HepG2 (cell line): ENCODE measurements at regions of chr9 and their contacts with region 1.

Region 1: GRCh38 chr9:32426278-32426939 is 42.0 kb downstream of the ACO1 start:
- DNase-seq: peak; percentile 92
- ATAC-seq: peak; percentile 96
- H3K4me3 ChIP-seq: peak overlapping the region in 2 of 3 experiments; percentile 25 to 40; a peak in 2 of 6 replicates
- H3K27ac ChIP-seq: peak overlapping the region; percentile 88
- H3K4me1 ChIP-seq: peaks cover 53% of the 10 kb centered on the region
- H3K27me3 ChIP-seq: no peaks in the 10 kb centered on the region
- CTCF ChIP-seq: no peak
- EP300 ChIP-seq: peak in 1 of 2 experiments; percentile 81; a peak in 3 of 4 replicates
- POLR2A ChIP-seq: peak in 1 of 2 experiments; percentile 27; a peak in 1 of 4 replicates
- RAD21 ChIP-seq: no peak

Region 2: DNA sequence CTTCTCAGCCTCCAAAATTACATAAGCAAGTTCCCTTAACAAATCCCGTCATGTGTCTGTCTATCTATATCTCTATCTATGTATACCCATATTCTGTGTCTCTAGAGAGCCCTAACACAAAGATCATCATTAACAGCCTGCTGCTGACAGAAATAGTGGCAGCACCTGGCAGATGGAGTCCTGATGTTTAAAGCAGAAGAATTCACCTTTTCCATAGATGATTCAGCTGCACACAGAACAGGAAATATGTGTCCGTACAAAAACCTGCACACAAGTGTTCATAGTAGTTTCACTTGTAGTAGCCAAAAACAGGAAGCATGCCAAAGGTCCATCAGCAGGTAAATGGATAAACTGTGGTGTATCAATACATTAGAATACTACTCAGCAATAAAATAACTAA is 87.0 kb before region 1 on chr9:
- CTCF ChIA-PET with region 1: no interaction called
- POLR2A ChIA-PET with region 1: no interaction called
- in situ Hi-C with region 1: no loop called
- intact Hi-C with region 1: no loop called
- DNase-seq: no peak
- ATAC-seq: no peak
- H3K4me3 ChIP-seq: no peak overlapping the region
- H3K27ac ChIP-seq: no peak overlapping the region
- H3K4me1 ChIP-seq: no peaks in the 10 kb centered on the region
- H3K27me3 ChIP-seq: no peaks in the 10 kb centered on the region
- CTCF ChIP-seq: no peak
- EP300 ChIP-seq: no peak
- POLR2A ChIP-seq: no peak
- RAD21 ChIP-seq: no peak

Region 3: GRCh38 chr9:32403567-32404260 is 22.7 kb before region 1 on chr9:
- CTCF ChIA-PET with region 1: no interaction called
- POLR2A ChIA-PET with region 1: no interaction called
- in situ Hi-C with region 1: no loop called
- intact Hi-C with region 1: no loop called
- DNase-seq: no peak
- ATAC-seq: no peak
- H3K4me3 ChIP-seq: no peak overlapping the region
- H3K27ac ChIP-seq: no peak overlapping the region
- H3K4me1 ChIP-seq: no peaks in the 10 kb centered on the region
- H3K27me3 ChIP-seq: no peaks in the 10 kb centered on the region
- CTCF ChIP-seq: no peak
- EP300 ChIP-seq: no peak
- POLR2A ChIP-seq: no peak
- RAD21 ChIP-seq: no peak

Region 4: GRCh38 chr9:32456564-32456963 is 30.2 kb after region 1 on chr9:
- CTCF ChIA-PET with region 1: no interaction called
- POLR2A ChIA-PET with region 1: interaction called, 3 read pairs
- in situ Hi-C with region 1: no loop called
- intact Hi-C with region 1: loop called (anchors 2 kb)
- DNase-seq: peak; percentile 82
- ATAC-seq: peak; percentile 96
- H3K4me3 ChIP-seq: no peak overlapping the region
- H3K27ac ChIP-seq: peak overlapping the region; percentile 66
- H3K4me1 ChIP-seq: peaks cover 28% of the 10 kb centered on the region
- H3K27me3 ChIP-seq: no peaks in the 10 kb centered on the region
- CTCF ChIP-seq: no peak
- EP300 ChIP-seq: peak; percentile 24 to 81; a peak in 2 of 4 replicates
- POLR2A ChIP-seq: no peak
- RAD21 ChIP-seq: no peak

Region 5: DNA sequence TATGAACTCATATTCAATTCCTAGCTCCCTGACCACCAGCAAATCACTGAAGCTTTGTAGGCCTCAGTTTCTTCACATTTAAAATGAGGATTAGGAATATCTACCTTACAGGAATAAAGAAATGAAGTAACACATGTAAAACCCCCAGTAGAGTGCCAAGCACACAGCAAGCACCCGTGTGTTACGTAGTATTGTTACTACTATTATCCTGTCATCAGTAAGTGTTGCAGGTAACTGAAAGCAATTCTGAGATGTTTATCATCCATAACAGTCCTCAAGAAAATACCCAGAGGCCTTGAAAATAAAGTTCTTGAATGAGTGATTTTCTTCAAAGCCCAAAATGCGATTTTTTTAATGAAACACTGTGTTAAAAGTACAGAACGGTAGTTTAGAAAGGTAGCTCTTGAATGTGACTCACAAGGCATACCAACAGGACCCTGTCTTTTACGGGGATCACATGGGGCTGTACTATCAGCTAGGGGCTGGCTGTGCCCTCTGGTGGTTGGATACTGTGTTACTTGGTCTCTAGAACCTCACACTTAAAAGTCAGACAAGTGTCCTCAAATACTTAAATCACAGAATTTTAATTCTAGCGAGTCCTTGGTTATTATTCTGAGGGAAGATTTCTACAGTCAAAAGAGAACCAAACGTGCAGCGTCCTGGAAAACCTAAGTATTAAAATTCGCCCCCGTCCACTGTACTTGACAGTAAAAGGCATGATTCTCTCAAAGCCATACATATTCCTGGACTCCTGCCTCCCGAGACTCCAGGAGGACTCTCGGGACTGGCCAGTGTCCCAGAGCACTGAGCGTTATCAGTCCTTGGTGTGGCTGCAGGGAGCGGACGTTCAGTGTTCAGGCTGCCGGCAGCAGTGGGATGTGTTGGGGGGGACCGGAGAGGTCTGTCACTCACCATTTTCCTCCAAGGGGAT is 145.8 kb after region 1 on chr9:
- CTCF ChIA-PET with region 1: no interaction called
- POLR2A ChIA-PET with region 1: no interaction called
- in situ Hi-C with region 1: no loop called
- intact Hi-C with region 1: loop called (anchors 1 kb)
- DNase-seq: peak; percentile 83
- ATAC-seq: peak; percentile 96
- H3K4me3 ChIP-seq: peak overlapping the region; percentile 81 to 95 (median 83)
- H3K27ac ChIP-seq: peak overlapping the region; percentile 77
- H3K4me1 ChIP-seq: peaks cover 24% of the 10 kb centered on the region
- H3K27me3 ChIP-seq: no peaks in the 10 kb centered on the region; a peak in 1 of 5 replicates
- CTCF ChIP-seq: peak; percentile 78
- EP300 ChIP-seq: no peak
- POLR2A ChIP-seq: no peak
- RAD21 ChIP-seq: peak; percentile 26; the same call in 1 of the 2 replicates